ENCODE measurements at regions of chr10 and their contacts with region 1.

Region 1: DNA sequence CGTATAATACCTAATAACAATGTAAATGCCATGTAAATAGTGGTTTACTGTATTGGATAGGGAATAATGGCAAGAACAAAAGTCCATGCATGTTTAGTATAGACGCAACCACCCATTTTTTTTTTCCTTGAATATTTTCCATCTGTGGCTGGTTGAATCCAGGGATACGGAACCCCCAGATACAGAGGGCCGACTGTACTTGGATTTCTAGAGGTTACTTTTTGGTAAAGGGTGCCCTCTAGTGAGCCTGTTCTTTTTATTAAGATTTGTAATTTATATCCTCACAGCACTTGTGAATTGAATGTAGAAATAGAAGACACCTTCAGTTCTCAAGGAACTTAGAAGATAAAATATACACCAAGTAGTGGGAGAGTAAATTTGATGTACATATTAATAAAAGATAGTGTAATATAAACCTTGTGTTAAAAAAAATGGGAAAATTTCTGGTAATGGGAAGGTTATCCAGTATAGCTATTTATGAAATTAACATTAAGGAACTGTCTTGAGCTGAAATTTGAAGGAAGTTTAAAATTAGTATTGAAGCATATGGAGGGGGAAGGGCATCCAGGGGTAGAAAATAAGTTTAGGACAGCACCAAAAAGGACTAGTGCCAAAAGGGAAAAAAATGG is 32.0 kb downstream of the EXOC6 start:
- DNase-seq: no peak
- ATAC-seq: peak; percentile 81 to 86
- H3K4me3 ChIP-seq: no peak overlapping the region
- H3K27ac ChIP-seq: peak overlapping the region in 1 of 4 donors; percentile 28
- H3K4me1 ChIP-seq: peaks cover 12 to 16% of the 10 kb centered on the region in 2 donors
- H3K27me3 ChIP-seq: no peaks in the 10 kb centered on the region
- CTCF ChIP-seq: peak in 4 of 5 experiments; percentile 33 to 60 (median 44)
- POLR2A ChIP-seq: no peak

Region 2: GRCh38 chr10:92848441-92849233 is 31.7 kb before region 1 on chr10 and contains the start of gene EXOC6:
- in situ Hi-C with region 1: no loop called
- intact Hi-C with region 1: loop called (anchors 1 kb)
- DNase-seq: peak; percentile 69 to 81
- ATAC-seq: peak; percentile 92 to 93
- H3K4me3 ChIP-seq: peak within 1 kb of the TSS; percentile 74 to 99 (median 94)
- H3K27ac ChIP-seq: peak within 1 kb of the TSS; percentile 79 to 95 (median 88)
- H3K4me1 ChIP-seq: peaks cover 8 to 21% of the 10 kb centered on the region in 2 donors
- H3K27me3 ChIP-seq: no peaks in the 10 kb centered on the region
- CTCF ChIP-seq: peak in 2 of 5 experiments; percentile 15 to 24
- POLR2A ChIP-seq: peak in 1 of 2 donors; percentile 29
- total RNA-seq, gene EXOC6: 11.8 to 16.8 (median 14.6) TPM

Region 3: DNA sequence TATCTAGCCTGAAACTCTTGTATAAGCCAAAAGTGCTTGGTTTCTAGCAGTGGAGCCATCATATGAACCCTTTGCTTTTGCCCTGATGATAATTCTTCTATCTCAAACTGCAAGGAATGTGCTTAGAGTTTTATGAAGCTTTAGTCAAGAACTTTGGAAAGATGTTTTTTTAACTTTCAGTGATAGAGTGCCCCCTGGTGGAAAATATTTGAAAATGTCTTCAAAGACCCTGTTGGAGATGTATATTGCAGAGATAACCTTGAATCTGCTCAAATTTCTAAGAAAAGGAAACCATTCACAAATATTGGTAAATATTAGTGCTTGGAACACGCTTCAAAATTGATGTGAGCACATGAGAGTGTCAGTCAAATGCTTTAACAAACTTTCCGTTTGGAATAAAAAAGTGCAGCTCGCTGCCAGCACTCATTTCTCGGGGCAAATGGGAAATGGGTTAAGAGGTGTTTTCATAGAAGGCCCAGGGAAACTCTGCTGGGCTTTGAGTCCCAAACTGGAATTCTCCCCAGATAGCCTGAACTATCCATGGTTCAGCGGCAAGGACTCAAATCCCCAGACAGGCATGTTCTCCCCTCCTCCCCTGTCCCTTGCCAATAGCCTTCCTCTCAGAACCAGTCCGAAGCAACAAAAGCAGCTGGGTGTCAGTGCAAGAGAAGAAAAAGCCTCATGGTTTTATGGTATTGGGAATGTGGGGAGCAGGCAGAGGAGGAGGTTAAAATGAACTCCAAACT is 472.5 kb after region 1 on chr10:
- in situ Hi-C with region 1: no loop called
- intact Hi-C with region 1: loop called (anchors 10 kb)
- DNase-seq: no peak
- ATAC-seq: no peak
- H3K4me3 ChIP-seq: no peak overlapping the region
- H3K27ac ChIP-seq: no peak overlapping the region
- H3K4me1 ChIP-seq: no peaks in the 10 kb centered on the region
- H3K27me3 ChIP-seq: no peaks in the 10 kb centered on the region
- CTCF ChIP-seq: peak; percentile 36 to 72 (median 54)
- POLR2A ChIP-seq: no peak